Posterior vena cava (tissue), 2 donors: ENCODE measurements at regions of chr2 and their contacts with region 1.

Region 1: DNA sequence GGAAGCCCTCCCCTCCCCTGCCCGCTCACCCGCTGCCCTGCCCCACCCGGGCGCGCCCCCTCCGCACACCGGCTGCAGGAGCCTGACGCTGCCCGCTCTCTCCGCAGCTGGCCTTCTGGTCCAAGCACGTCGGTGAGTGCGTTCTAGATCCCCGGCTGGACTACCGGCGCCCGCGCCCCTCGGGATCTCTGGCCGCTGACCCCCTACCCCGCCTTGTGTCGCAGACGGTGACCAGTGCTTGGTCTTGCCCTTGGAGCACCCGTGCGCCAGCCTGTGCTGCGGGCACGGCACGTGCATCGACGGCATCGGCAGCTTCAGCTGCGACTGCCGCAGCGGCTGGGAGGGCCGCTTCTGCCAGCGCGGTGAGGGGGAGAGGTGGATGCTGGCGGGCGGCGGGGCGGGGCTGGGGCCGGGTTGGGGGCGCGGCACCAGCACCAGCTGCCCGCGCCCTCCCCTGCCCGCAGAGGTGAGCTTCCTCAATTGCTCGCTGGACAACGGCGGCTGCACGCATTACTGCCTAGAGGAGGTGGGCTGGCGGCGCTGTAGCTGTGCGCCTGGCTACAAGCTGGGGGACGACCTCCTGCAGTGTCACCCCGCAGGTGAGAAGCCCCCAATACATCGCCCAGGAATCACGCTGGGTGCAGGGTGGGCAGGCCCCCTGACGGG is 4.7 kb downstream of the PROC start:
- DNase-seq: no peak

Region 2: DNA sequence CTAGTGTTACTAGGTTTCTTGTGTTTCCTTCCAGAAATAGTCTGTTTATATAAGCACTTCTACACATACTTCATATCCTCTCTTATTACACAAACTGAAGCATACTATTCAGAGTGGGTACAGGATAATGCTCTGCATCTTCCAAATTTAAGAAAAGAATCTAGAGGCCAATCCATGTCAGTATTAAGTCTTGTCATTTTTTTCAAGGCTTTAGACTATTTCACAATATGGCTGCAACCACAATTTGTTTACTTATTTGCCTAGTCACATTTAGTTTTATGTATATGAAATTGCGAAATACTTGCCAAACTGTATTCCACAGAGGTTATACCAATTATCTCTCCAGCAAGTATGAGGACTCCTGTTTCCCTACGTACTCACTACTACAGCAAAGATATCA is 75.4 kb after region 1 on chr2:
- intact Hi-C with region 1: loop called in 1 of 2 experiments (anchors 2 kb)
- DNase-seq: no peak

Region 3: GRCh38 chr2:128103407-128103806 is 680.5 kb after region 1 on chr2:
- intact Hi-C with region 1: loop called in 1 of 2 experiments (anchors 5 kb)
- DNase-seq: no peak